ENCODE measurements at regions of chr1 and their contacts with region 1.

Region 1: DNA sequence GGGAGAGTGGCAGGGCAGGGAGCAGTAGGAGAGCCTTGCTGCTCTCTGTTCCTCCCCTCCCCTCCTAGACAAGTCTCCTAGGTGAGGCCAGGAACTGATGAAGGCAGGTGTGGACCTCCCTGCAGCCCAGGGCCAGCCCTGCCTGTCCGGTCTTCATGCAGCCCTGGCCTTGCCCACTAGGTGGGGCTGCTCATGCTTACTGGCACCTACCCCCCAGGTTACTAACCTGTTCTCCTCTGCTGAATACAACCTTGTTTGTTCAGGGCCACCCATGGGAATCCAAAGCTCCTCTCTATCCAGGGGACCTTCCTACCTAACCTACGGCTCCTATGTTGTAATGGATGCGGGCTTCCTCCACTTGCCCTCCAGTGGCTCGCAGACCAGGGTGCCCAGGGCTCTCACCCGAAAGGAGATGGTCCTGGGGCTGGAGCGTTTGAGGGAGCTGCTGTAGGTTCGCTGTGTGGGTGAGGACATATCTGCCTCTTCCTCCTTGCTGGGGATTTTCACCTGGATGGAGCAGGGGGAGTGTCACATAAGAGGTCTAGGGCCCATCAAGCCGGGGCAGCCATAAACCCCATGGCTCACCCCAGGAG is 7.9 kb upstream of the TNNT2 start:
- DNase-seq: peak; percentile 62
- ATAC-seq: peak; percentile 95
- H3K4me3 ChIP-seq: no peak overlapping the region
- H3K27ac ChIP-seq: no peak overlapping the region
- H3K4me1 ChIP-seq: no peaks in the 10 kb centered on the region
- H3K27me3 ChIP-seq: no peaks in the 10 kb centered on the region
- CTCF ChIP-seq: peak; percentile 95
- EP300 ChIP-seq: no peak
- POLR2A ChIP-seq: no peak
- RAD21 ChIP-seq: peak; percentile 89

Region 2: DNA sequence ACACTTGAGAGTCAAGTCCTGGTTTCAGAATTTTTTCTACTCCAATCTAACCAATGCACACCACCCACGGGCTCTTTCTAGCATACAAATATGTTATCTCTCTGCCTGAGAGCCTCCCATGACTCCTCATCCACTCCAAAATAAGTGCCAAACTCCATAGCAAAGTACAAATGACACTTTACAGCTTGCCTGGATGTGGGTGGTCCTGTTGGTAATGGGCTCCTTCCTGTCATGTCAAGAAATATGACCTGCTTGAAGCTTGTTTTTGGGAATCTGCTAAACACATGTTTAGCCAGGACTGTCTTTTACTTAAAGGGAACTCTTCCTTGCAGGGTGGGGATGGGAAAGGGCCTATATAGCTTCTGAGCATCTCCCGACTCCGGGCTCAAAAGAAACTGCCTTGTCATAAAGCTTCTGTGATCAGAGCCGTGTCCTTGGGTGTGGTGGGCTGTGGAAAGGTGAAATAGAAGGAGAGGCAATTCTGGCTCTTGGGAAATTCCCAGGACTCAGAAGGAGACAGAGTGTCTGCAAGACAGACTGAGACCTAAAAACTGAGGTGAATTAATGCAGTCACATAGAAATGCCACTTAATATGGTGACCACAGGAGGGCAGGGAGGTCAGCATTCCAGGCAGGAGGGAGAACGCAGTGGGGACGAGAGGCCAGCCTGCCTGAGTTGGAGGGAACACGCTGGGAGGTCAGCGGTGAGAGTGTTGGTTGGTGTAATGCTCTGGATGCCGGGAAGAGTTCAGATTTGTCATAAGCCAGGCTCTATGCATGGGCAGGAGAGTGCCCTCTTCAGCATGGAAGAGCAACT is 200.9 kb before region 1 on chr1:
- CTCF ChIA-PET with region 1: no interaction called
- POLR2A ChIA-PET with region 1: no interaction called
- in situ Hi-C with region 1: no loop called
- intact Hi-C with region 1: no loop called
- DNase-seq: peak; percentile 58
- ATAC-seq: peak; percentile 98
- H3K4me3 ChIP-seq: no peak overlapping the region
- H3K27ac ChIP-seq: no peak overlapping the region
- H3K4me1 ChIP-seq: peaks cover 17% of the 10 kb centered on the region
- H3K27me3 ChIP-seq: peaks cover 3 to 54% of the 10 kb centered on the region in 2 experiments; a peak in 4 of 5 replicates
- CTCF ChIP-seq: peak; percentile 74
- EP300 ChIP-seq: no peak
- POLR2A ChIP-seq: no peak
- RAD21 ChIP-seq: peak; percentile 53; the same call in 1 of the 2 replicates

Region 3: GRCh38 chr1:201329286-201329685 is 56.1 kb before region 1 on chr1:
- CTCF ChIA-PET with region 1: no interaction called
- POLR2A ChIA-PET with region 1: no interaction called
- in situ Hi-C with region 1: no loop called
- intact Hi-C with region 1: no loop called
- DNase-seq: no peak
- ATAC-seq: no peak
- H3K4me3 ChIP-seq: no peak overlapping the region
- H3K27ac ChIP-seq: no peak overlapping the region
- H3K4me1 ChIP-seq: no peaks in the 10 kb centered on the region
- H3K27me3 ChIP-seq: peaks cover 0 to 5% of the 10 kb centered on the region in 2 experiments; a peak in 2 of 5 replicates
- CTCF ChIP-seq: no peak
- EP300 ChIP-seq: no peak
- POLR2A ChIP-seq: no peak
- RAD21 ChIP-seq: no peak

Region 4: DNA sequence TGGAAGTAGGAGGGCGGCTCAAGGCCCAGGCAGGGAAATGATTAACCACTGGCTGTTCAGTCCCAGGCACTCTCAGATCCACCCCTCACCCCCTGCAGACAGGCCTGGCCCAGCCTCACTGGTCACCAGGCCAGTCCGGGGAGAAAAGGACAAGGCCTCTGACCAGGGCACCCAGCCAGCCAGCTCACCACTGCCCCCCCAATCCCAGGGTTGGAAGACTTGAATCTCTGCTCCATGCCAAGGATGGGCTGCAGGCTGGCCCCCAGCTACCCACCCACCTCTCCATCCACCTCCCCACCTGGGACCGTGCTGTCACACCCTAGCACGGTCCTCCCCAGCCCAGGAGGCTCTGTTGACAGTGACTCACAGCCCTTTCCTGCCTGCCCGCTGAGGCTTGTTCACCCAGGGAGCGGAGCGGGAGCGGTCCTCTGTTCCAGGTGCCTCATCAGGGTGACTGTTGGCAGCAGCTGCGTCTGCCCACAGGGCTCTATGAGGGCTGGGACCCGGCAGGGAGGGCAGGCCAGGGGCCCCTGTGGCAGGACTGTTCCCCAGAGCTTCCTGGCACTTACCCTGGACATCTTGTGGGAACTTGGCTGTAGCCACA is 11.6 kb after region 1 on chr1:
- CTCF ChIA-PET with region 1: interaction called, 3 read pairs
- POLR2A ChIA-PET with region 1: interaction called, 7 read pairs
- in situ Hi-C with region 1: no loop called
- intact Hi-C with region 1: loop called (anchors 1 kb)
- DNase-seq: peak; percentile 77
- ATAC-seq: peak; percentile 87
- H3K4me3 ChIP-seq: peak overlapping the region; percentile 77 to 82 (median 79)
- H3K27ac ChIP-seq: peak overlapping the region; percentile 84
- H3K4me1 ChIP-seq: peaks cover 61% of the 10 kb centered on the region
- H3K27me3 ChIP-seq: no peaks in the 10 kb centered on the region
- CTCF ChIP-seq: peak; percentile 53
- EP300 ChIP-seq: peak; percentile 25 to 33; a peak in 1 of 4 replicates
- POLR2A ChIP-seq: peak; percentile 47 to 53; a peak in 3 of 4 replicates
- RAD21 ChIP-seq: peak; percentile 18; the same call in 1 of the 2 replicates

Region 5: DNA sequence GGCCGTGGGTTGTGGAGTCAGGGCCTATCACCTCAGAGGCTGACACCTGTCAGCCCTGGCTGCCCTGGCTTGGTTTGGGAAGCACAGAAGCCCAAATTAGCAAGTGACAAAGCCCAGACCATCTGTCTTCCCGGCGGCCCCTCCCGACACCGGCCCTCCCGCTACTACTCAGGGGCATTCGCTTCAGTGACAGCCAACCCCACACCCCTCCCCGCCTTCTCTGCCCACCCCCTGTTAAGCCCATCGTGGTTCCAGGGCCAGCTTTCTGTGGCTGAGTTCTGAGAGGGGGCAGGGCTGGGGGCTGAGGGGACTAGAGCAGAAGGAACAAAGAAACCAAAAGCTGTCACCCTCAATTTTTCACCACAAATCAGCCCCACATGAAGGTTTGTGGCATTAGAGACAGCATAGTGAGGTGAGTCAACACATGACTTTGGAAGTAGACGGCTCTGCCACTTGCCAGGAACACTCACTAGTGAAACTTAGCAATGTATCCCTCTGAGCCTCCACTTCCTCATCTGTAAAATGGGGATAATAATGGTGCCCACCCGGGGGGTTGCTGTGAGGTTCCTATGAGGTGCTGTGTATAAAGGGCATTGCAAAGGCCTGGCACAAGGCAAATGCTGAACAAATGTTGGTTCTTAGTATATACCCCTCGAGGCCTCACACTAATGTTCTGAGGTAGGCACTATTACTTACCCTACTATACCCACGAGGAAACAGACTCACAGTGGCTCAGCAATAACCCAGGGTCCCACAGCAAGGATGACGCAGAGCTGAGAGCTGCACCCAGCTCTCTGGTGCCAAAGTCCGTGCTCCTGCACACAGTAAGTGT is 41.3 kb after region 1 on chr1:
- CTCF ChIA-PET with region 1: no interaction called
- POLR2A ChIA-PET with region 1: no interaction called
- in situ Hi-C with region 1: no loop called
- intact Hi-C with region 1: no loop called
- DNase-seq: no peak
- ATAC-seq: no peak
- H3K4me3 ChIP-seq: no peak overlapping the region
- H3K27ac ChIP-seq: no peak overlapping the region
- H3K4me1 ChIP-seq: no peaks in the 10 kb centered on the region
- H3K27me3 ChIP-seq: peaks cover 10 to 62% of the 10 kb centered on the region in 2 experiments
- CTCF ChIP-seq: no peak
- EP300 ChIP-seq: no peak
- POLR2A ChIP-seq: no peak
- RAD21 ChIP-seq: no peak

Measured in HepG2 (cell line).